ENCODE measurements at regions of chr2 and their contacts with region 1.

Region 1: GRCh38 chr2:25606892-25607291 is 66.5 kb downstream of the DTNB start:
- DNase-seq: peak; percentile 15
- ATAC-seq: peak; percentile 60
- H3K4me3 Mint-ChIP-seq: no peak overlapping the region
- H3K27ac Mint-ChIP-seq: no peak overlapping the region
- H3K4me1 Mint-ChIP-seq: peaks cover 5% of the 10 kb centered on the region
- H3K27me3 Mint-ChIP-seq: no peaks in the 10 kb centered on the region
- CTCF ChIP-seq: peak; percentile 86

Region 2: DNA sequence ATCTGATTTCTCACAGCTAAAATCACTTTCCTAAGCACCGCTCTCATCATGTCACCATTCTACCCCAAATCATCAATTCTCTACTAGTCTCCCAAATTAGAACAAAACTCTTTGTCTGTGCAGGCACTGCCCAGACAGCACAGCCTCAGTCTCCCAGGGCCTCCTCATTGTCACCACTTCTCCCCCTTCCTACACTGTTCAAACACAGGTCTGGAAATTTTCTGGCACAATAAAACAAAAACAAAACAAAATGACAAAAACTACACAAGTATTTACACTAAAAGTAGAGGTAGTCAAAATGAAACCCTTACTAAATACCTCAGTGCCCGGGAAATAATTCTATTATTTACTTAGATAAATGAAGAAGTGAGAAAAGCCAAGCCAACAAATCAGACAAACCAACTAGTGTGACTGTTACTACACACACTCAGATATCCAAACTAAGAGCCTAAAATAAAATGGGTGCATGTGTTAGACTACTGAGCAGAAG is 108.9 kb before region 1 on chr2:
- CTCF ChIA-PET with region 1: no interaction called
- POLR2A ChIA-PET with region 1: no interaction called
- intact Hi-C with region 1: no loop called
- DNase-seq: no peak
- ATAC-seq: no peak
- H3K4me3 Mint-ChIP-seq: no peak overlapping the region
- H3K27ac Mint-ChIP-seq: no peak overlapping the region
- H3K4me1 Mint-ChIP-seq: no peaks in the 10 kb centered on the region
- H3K27me3 Mint-ChIP-seq: no peaks in the 10 kb centered on the region
- CTCF ChIP-seq: no peak

Region 3: DNA sequence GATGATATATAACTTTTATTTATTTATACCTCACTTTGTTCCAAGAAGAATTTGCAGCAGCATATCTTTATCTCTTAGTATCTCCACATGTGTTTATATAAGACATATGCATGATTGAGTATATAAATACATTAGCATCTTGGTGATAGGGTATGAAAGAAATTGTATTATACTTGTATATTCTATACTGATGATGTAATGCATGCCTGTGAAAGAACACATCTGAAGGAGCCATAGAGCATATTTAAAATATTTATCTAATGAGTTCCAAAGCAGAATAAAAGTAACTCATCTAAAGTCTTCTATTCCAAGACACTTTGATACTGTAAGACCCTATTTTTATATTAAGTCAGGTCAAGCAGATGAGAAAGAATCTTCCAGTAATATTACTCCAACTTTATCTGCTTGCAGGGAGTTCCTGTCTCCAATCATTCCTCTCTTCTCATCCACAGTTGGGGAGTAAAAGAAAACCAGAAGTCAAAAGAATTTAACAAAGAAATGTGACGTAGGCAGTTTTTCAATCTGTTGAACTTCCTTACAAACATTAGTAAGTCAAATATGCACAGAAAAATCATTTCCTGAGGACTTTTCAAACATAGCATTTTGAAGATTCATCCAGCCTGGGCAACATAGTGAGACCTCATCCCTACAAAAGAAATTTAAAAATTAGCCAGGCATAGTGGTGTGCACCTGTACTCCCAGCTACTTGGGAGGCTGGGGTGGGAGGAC is 10.2 kb before region 1 on chr2:
- CTCF ChIA-PET with region 1: interaction called, 17 read pairs
- POLR2A ChIA-PET with region 1: interaction called, 5 read pairs
- intact Hi-C with region 1: no loop called
- DNase-seq: no peak
- ATAC-seq: no peak
- H3K4me3 Mint-ChIP-seq: no peak overlapping the region
- H3K27ac Mint-ChIP-seq: no peak overlapping the region
- H3K4me1 Mint-ChIP-seq: peaks cover 20% of the 10 kb centered on the region
- H3K27me3 Mint-ChIP-seq: no peaks in the 10 kb centered on the region
- CTCF ChIP-seq: no peak

Region 4: GRCh38 chr2:25664183-25664964 is 57.5 kb after region 1 on chr2:
- CTCF ChIA-PET with region 1: interaction called, 48 read pairs
- POLR2A ChIA-PET with region 1: no interaction called
- intact Hi-C with region 1: no loop called
- DNase-seq: peak; percentile 56
- ATAC-seq: peak; percentile 60
- H3K4me3 Mint-ChIP-seq: peak overlapping the region; percentile 31
- H3K27ac Mint-ChIP-seq: no peak overlapping the region
- H3K4me1 Mint-ChIP-seq: peaks cover 15% of the 10 kb centered on the region
- H3K27me3 Mint-ChIP-seq: no peaks in the 10 kb centered on the region
- CTCF ChIP-seq: peak; percentile 33

Region 5: GRCh38 chr2:25707927-25708590 is 101.2 kb after region 1 on chr2:
- CTCF ChIA-PET with region 1: interaction called, 18 read pairs
- POLR2A ChIA-PET with region 1: interaction called, 3 read pairs
- intact Hi-C with region 1: no loop called
- DNase-seq: no peak
- ATAC-seq: no peak
- H3K4me3 Mint-ChIP-seq: no peak overlapping the region
- H3K27ac Mint-ChIP-seq: no peak overlapping the region
- H3K4me1 Mint-ChIP-seq: peaks cover 8% of the 10 kb centered on the region
- H3K27me3 Mint-ChIP-seq: peaks cover 9% of the 10 kb centered on the region
- CTCF ChIP-seq: no peak

Region 6: DNA sequence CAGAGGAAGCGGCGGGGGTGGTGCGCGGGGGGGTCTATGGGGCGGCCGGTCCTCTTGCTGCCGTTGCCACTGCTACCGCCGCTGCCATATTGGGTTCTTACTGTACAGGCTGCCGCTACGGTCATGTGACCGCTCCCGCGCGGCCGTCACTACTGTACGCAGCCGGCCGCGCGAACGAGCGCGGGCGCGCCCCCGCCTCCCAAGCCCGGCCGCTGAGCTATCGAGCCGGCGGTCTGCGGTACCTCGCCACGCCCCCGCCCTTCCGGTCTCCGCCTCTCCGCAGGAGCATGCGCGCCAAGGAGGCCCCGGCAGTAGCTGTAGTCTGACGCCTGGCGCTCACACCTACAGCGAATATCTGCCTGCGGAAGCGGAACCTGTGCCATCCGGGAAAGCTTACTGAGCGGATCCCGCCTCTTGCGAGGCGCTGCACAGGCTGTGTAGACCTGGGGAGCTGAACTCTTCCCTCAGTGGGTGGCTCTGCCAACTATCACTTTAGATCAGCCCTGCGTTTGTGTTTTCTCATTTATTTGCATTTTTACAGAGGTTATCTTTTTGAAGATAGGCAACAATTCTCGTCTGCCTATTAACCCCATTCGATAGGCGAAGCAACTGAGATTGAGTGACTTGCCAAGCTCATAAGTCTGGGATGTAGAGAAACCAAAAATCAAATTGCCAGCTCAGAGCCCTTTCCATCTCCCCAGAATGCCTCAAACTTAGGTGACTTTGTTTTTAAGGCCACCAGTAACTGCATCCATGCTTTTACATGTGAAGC is 271.7 kb after region 1 on chr2 and contains the start of gene ASXL2:
- CTCF ChIA-PET with region 1: interaction called, 17 read pairs
- POLR2A ChIA-PET with region 1: no interaction called
- intact Hi-C with region 1: no loop called
- DNase-seq: peak; percentile 97
- ATAC-seq: peak; percentile 88
- H3K4me3 Mint-ChIP-seq: peak within 1 kb of the TSS; percentile 95
- H3K27ac Mint-ChIP-seq: peak within 1 kb of the TSS; percentile 98
- H3K4me1 Mint-ChIP-seq: peaks cover 43% of the 10 kb centered on the region
- H3K27me3 Mint-ChIP-seq: no peaks in the 10 kb centered on the region
- CTCF ChIP-seq: no peak
- total RNA-seq, gene ASXL2: 42.5 to 42.8 TPM

Measured in activated CD8-positive, alpha-beta T cell treated with anti-CD3 and anti-CD28 coated beads for 36 hours (primary cell).